ENCODE measurements at regions of chr2 and their contacts with region 1.

Region 1: GRCh38 chr2:15636972-15637785 is 45.5 kb downstream of the DDX1 start:
- DNase-seq: peak; percentile 70
- H3K4me3 Mint-ChIP-seq: no peak overlapping the region
- H3K27ac Mint-ChIP-seq: no peak overlapping the region
- H3K4me1 Mint-ChIP-seq: peaks cover 6% of the 10 kb centered on the region
- H3K27me3 Mint-ChIP-seq: no peaks in the 10 kb centered on the region
- CTCF ChIP-seq: peak; percentile 86

Region 2: GRCh38 chr2:15546297-15547098 is 90.7 kb before region 1 on chr2:
- CTCF ChIA-PET with region 1: no interaction called
- POLR2A ChIA-PET with region 1: no interaction called
- intact Hi-C with region 1: no loop called
- DNase-seq: no peak
- H3K4me3 Mint-ChIP-seq: no peak overlapping the region
- H3K27ac Mint-ChIP-seq: no peak overlapping the region
- H3K4me1 Mint-ChIP-seq: no peaks in the 10 kb centered on the region
- H3K27me3 Mint-ChIP-seq: no peaks in the 10 kb centered on the region
- CTCF ChIP-seq: no peak

Region 3: GRCh38 chr2:15560988-15561573 is 76.1 kb before region 1 on chr2 and contains the start of gene NBAS:
- CTCF ChIA-PET with region 1: no interaction called
- POLR2A ChIA-PET with region 1: no interaction called
- intact Hi-C with region 1: no loop called
- DNase-seq: peak; percentile 90
- H3K4me3 Mint-ChIP-seq: peak within 1 kb of the TSS; percentile 98
- H3K27ac Mint-ChIP-seq: peak within 1 kb of the TSS; percentile 94
- H3K4me1 Mint-ChIP-seq: peaks cover 24% of the 10 kb centered on the region
- H3K27me3 Mint-ChIP-seq: no peaks in the 10 kb centered on the region
- CTCF ChIP-seq: no peak
- total RNA-seq, gene NBAS: 46.4 and 55.6 TPM in 2 replicates

Region 4: GRCh38 chr2:15730545-15731212 is 93.5 kb after region 1 on chr2:
- CTCF ChIA-PET with region 1: interaction called, 3 read pairs
- POLR2A ChIA-PET with region 1: no interaction called
- intact Hi-C with region 1: loop called (anchors 5 kb)
- DNase-seq: peak; percentile 97
- H3K4me3 Mint-ChIP-seq: no peak overlapping the region
- H3K27ac Mint-ChIP-seq: no peak overlapping the region
- H3K4me1 Mint-ChIP-seq: peaks cover 29% of the 10 kb centered on the region
- H3K27me3 Mint-ChIP-seq: peaks cover 99% of the 10 kb centered on the region
- CTCF ChIP-seq: no peak

Region 5: GRCh38 chr2:15939854-15940660 is 302.9 kb after region 1 on chr2 and contains the start of gene MYCN:
- CTCF ChIA-PET with region 1: interaction called, 20 read pairs
- POLR2A ChIA-PET with region 1: no interaction called
- intact Hi-C with region 1: loop called (anchors 1 kb)
- DNase-seq: peak; percentile 42
- H3K4me3 Mint-ChIP-seq: no peak within 1 kb of the TSS
- H3K27ac Mint-ChIP-seq: no peak within 1 kb of the TSS
- H3K4me1 Mint-ChIP-seq: no peaks in the 10 kb centered on the region
- H3K27me3 Mint-ChIP-seq: peaks cover 55% of the 10 kb centered on the region
- CTCF ChIP-seq: peak; percentile 85
- total RNA-seq, gene MYCN: not detected in 2 replicates

Region 6: DNA sequence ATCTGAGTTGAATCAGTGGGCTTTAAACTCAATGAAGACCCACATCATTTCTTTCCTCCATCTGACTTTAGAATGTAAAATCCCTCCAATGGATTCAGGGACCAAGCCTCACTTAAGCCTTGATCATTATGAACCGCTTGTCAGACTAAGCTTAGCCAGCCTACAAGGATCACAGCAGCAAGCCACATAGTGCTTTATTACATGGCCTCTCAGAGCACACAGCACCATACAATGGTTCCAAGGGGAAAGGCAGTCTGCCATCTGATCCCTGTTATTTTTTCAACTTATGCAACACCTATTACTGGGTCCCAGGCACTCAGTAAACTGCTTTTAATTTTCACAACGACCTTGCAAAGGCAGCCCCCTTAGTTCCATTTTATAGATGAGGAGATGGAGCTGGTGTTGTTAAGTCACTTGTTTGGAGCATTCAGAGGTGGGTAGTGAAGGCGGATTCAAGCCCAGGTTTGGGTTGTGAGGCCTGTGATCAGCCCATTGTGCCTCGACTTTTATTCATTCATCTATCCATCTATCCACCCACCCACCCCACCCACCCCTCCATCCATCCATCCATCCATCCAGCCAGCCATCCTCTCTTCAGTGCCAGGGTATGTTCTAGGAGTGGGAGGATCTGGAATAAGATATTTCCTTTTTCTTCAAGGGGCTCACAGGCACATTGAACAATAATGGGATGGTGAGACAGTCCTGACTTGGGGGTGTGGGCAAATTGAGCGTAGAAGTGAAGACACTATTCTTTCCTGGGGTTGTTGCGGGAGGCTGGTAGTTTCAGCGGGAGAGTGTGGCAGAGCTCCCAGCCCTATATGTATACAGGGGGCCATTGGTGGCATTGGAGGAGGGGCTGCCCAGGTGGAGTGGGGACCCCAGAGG is 444.4 kb after region 1 on chr2:
- CTCF ChIA-PET with region 1: no interaction called
- POLR2A ChIA-PET with region 1: no interaction called
- intact Hi-C with region 1: no loop called
- DNase-seq: no peak
- H3K4me3 Mint-ChIP-seq: no peak overlapping the region
- H3K27ac Mint-ChIP-seq: no peak overlapping the region
- H3K4me1 Mint-ChIP-seq: no peaks in the 10 kb centered on the region
- H3K27me3 Mint-ChIP-seq: no peaks in the 10 kb centered on the region
- CTCF ChIP-seq: no peak

Region 7: DNA sequence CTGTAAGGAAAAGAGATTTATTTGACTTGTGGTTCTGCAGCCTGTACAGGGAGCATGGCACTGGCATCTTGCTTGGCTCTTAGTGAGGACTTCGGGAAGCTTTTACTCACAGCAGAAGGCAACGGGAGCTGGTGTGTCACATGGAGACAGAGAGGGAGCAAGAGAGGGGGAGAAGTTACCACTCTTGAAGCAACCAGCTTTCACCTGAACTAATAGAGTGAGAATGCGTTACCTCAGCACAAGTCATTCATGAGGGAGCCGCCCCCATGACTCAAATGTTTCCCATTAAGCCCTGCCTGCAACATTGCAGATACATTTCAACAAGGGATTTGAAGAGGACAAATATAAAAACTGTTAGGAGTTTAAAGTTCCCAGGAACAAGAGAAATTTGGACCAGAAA is 838.4 kb after region 1 on chr2:
- CTCF ChIA-PET with region 1: no interaction called
- POLR2A ChIA-PET with region 1: no interaction called
- intact Hi-C with region 1: no loop called
- DNase-seq: peak; percentile 55
- H3K4me3 Mint-ChIP-seq: no peak overlapping the region
- H3K27ac Mint-ChIP-seq: no peak overlapping the region
- H3K4me1 Mint-ChIP-seq: no peaks in the 10 kb centered on the region
- H3K27me3 Mint-ChIP-seq: no peaks in the 10 kb centered on the region
- CTCF ChIP-seq: no peak

Region 8: GRCh38 chr2:16487686-16488085 is 850.5 kb after region 1 on chr2:
- CTCF ChIA-PET with region 1: interaction called, 6 read pairs
- POLR2A ChIA-PET with region 1: no interaction called
- intact Hi-C with region 1: loop called (anchors 1 kb)
- DNase-seq: peak; percentile 60
- H3K4me3 Mint-ChIP-seq: no peak overlapping the region
- H3K27ac Mint-ChIP-seq: no peak overlapping the region
- H3K4me1 Mint-ChIP-seq: no peaks in the 10 kb centered on the region
- H3K27me3 Mint-ChIP-seq: peaks cover 22% of the 10 kb centered on the region
- CTCF ChIP-seq: peak; percentile 42

Measured in MCF 10A (cell line).